ENCODE measurements at regions of chr5 and their contacts with region 1.

Region 1: DNA sequence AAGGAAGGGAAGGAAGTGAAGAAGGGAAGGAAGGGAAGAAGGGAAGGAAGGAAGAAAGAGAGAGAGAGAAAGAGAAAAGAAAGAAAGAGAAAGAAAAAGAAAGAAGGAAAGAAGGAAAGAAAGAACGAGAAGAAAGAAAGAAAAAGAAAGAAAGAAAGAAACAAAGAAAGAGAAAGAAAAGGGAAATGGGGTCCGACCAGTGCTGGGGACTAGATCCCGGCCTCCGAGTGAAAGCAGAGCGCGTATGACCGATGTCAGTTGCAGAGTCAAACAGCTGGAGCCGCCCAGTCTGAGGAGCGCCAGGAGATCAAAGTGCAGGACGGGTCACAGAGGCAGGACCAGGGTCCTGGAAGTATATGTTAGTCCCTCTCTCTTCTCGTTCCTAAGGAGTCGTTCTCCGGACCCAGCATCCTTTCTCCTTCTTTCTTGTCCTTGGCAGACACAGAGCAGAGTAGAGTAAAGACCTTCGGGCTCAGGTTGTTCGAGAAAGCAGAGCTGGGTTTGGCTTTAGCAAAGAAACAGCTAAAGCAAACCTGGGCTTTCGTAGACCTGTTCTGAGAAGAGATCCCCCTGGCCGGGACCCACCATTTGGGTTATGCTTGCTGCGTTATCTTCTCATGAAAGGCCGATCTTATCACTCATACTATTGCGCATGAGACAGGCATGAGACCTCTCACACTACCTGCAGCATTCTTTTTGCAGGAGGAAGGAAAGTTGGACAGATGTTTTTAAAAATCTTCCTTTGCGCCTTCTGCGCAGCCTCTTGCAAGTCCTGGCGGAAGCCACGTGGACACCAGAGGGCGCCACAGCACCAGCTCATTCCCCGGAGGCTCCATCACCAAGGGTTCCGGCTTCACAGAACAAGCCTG is 305.2 kb upstream of the MSX2 start:
- DNase-seq: peak; percentile 90
- H3K4me3 ChIP-seq: peak overlapping the region; percentile 54
- H3K27ac ChIP-seq: no peak overlapping the region
- H3K27me3 ChIP-seq: no peaks in the 10 kb centered on the region
- CTCF ChIP-seq: peak; percentile 99

Region 2: GRCh38 chr5:174327317-174328236 is 91.6 kb before region 1 on chr5:
- CTCF ChIA-PET with region 1: interaction called, 10 read pairs
- POLR2A ChIA-PET with region 1: no interaction called
- DNase-seq: peak; percentile 51
- H3K4me3 ChIP-seq: no peak overlapping the region
- H3K27ac ChIP-seq: no peak overlapping the region
- H3K27me3 ChIP-seq: peaks cover 4% of the 10 kb centered on the region
- CTCF ChIP-seq: peak; percentile 83

Region 3: DNA sequence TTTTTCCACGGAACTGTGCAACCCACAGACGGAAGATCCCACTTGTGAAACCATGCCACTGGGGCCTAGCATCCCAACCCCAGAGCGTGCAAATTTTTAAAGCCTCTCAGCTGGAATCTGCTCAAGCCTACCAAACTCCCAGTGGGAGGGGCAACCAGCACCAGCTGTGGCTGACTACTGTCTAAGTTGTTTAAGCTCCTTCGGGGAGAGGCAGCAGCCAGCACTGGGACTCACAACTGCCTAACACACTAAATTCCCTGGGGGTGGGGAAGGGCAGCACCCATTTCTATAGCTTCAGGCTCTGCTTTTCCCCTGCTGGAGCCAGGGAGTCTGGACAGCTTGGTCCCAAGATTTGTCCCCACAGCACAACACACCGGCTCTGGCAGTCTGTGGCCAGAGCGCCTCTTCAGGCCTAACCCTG is 17.6 kb after region 1 on chr5:
- CTCF ChIA-PET with region 1: interaction called, 13 read pairs
- POLR2A ChIA-PET with region 1: no interaction called
- DNase-seq: no peak
- H3K4me3 ChIP-seq: no peak overlapping the region
- H3K27ac ChIP-seq: no peak overlapping the region
- H3K27me3 ChIP-seq: peaks cover 4% of the 10 kb centered on the region
- CTCF ChIP-seq: no peak

Region 4: GRCh38 chr5:174479325-174479724 is 60.2 kb after region 1 on chr5:
- CTCF ChIA-PET with region 1: no interaction called
- POLR2A ChIA-PET with region 1: no interaction called
- DNase-seq: no peak
- H3K4me3 ChIP-seq: no peak overlapping the region
- H3K27ac ChIP-seq: no peak overlapping the region
- H3K27me3 ChIP-seq: peaks cover 5% of the 10 kb centered on the region
- CTCF ChIP-seq: no peak

Region 5: GRCh38 chr5:174706997-174707572 is 287.9 kb after region 1 on chr5:
- CTCF ChIA-PET with region 1: interaction called, 10 read pairs
- POLR2A ChIA-PET with region 1: no interaction called
- DNase-seq: peak; percentile 21
- H3K4me3 ChIP-seq: no peak overlapping the region; the same call in 1 of the 2 replicates
- H3K27ac ChIP-seq: no peak overlapping the region
- H3K27me3 ChIP-seq: peaks cover 46% of the 10 kb centered on the region
- CTCF ChIP-seq: no peak

Region 6: DNA sequence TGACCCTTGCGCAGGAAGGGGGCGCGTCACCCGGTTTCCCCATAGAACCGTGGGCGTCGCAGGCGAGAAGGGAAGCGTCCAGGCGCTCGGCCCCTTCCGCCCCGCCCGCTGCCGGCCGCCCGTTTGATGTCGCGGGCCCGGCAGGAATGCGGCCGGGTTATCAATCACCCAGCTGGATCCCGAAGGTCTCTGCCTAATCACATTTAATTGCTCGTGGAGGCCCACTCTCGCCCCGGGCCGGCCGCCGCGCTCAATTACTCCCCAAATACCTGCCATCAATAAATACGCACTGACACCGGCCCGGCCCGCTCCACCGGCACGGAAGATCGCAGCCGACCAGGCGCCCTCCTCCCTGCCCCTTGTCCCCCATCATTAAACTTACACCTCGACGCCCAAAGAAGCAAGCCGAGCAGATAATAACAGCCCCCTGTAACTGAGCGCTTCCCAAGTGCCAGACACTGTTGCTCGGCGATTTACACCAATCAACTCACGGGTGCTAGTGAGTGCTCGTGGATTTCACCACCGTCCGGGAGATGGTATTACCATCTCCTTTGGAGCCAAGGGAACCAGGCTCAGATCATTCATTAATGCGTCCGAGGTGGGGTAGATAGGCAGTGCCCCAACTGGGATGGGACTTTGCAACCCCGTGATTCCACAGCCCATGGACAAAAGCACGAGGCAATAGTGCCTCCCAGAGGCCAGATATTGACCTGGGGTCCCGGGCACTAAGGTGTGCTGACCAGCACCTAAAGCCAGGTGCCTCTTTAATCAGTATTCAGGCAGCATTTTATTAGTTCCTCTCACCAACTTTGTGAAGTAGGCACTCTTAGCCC is 316.6 kb after region 1 on chr5:
- CTCF ChIA-PET with region 1: interaction called, 47 read pairs
- POLR2A ChIA-PET with region 1: no interaction called
- DNase-seq: no peak
- H3K4me3 ChIP-seq: peak overlapping the region; percentile 44
- H3K27ac ChIP-seq: no peak overlapping the region
- H3K27me3 ChIP-seq: peaks cover 49% of the 10 kb centered on the region
- CTCF ChIP-seq: peak; percentile 62

Region 7: GRCh38 chr5:174751154-174752000 is 332.2 kb after region 1 on chr5:
- CTCF ChIA-PET with region 1: interaction called, 75 read pairs
- POLR2A ChIA-PET with region 1: no interaction called
- DNase-seq: no peak
- H3K4me3 ChIP-seq: peak overlapping the region; percentile 55
- H3K27ac ChIP-seq: no peak overlapping the region
- H3K27me3 ChIP-seq: peaks cover 33% of the 10 kb centered on the region
- CTCF ChIP-seq: no peak

Region 8: GRCh38 chr5:174793684-174794328 is 374.6 kb after region 1 on chr5:
- CTCF ChIA-PET with region 1: interaction called, 133 read pairs
- POLR2A ChIA-PET with region 1: interaction called, 5 read pairs
- DNase-seq: no peak
- H3K4me3 ChIP-seq: no peak overlapping the region
- H3K27ac ChIP-seq: no peak overlapping the region
- H3K27me3 ChIP-seq: peaks cover 9% of the 10 kb centered on the region
- CTCF ChIP-seq: peak; percentile 90